Mammary epithelial cell (primary cell): ENCODE measurements at regions of chrX and their contacts with region 1.

Region 1: DNA sequence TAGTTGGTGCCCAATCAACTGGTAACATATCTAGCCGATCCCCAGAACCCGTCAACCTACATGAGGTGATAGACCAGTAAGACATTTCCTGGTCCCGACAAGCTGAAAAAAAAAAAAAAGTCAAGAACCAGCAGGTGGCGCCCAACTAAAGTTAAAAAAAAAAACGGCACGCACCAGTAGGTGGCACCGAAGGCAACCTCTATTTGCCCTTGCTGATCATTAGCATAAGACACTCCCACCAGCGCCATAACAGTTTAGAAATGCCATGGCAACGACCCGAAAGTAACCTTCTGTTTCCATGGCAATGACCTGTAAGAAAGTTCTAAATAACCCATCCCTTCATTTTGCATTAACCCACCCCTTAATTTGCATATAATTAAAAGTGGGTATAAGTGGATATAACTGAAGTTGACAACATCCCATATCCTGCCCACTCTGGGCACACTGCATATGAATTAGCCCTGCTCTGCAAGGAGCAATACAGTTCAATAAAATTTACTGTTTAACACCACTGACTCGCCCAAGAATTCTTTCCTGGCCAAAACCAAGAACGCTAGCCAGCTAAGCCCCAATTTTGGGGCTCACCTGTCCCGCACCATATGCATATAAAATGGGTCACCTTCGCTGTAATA is 83.9 kb upstream of the SPANXB1 start:
- DNase-seq: peak; percentile 49
- H3K4me3 ChIP-seq: no peak overlapping the region
- H3K27ac ChIP-seq: no peak overlapping the region
- H3K4me1 ChIP-seq: no peaks in the 10 kb centered on the region
- H3K27me3 ChIP-seq: no peaks in the 10 kb centered on the region
- CTCF ChIP-seq: peak; percentile 53 to 71

Region 2: DNA sequence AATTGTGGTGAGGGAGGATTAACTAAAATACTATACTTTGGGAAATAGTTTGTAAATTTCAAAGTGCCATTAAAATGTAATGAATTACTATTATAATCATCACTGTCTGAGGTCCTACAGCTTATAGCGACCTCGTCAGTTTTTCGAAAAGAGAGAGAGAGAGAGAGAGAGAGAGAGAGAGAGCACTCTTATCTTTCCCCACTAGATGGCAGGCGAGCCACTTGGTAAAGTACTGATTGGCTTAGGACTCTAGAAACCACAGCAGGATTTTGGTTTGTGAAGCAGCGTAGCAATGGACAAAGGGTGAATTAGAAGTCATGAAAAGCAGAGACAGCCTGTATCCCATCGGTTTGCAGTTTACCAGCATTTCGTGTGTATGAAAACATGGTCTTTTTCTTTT is 156.5 kb before region 1 on chrX:
- CTCF ChIA-PET with region 1: interaction called, 11 read pairs
- dilution Hi-C with region 1: no loop called
- in situ Hi-C with region 1: no loop called
- intact Hi-C with region 1: no loop called
- DNase-seq: peak; percentile 35
- H3K4me3 ChIP-seq: no peak overlapping the region
- H3K27ac ChIP-seq: no peak overlapping the region
- H3K4me1 ChIP-seq: no peaks in the 10 kb centered on the region
- H3K27me3 ChIP-seq: no peaks in the 10 kb centered on the region
- CTCF ChIP-seq: peak; percentile 76 to 83

Region 3: DNA sequence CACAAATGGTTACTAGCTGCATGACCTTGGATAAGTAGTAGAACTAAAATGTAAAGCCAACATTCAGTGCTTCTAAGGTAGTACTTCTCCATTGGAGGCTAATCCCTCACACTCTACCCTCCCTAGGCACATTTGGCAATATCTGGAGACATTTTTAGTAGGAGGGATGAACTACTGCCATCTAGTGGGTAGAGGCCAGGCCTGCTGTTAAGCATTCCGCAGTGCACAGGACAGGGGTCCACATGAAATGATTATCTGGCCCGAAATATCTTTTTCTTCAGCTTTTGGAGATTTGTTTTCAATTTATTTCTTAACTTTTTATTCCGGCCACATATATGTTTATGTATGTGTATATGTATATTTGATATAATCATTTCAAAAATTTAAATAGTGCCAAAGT is 359.8 kb after region 1 on chrX:
- CTCF ChIA-PET with region 1: no interaction called
- dilution Hi-C with region 1: no loop called
- in situ Hi-C with region 1: loop called in 1 of 2 experiments (anchors 25 kb)
- intact Hi-C with region 1: loop called (anchors 1 kb)
- DNase-seq: no peak
- H3K4me3 ChIP-seq: no peak overlapping the region
- H3K27ac ChIP-seq: no peak overlapping the region
- H3K4me1 ChIP-seq: no peaks in the 10 kb centered on the region
- H3K27me3 ChIP-seq: no peaks in the 10 kb centered on the region
- CTCF ChIP-seq: peak; percentile 77 to 82